ENCODE measurements at regions of chr9 and their contacts with region 1.

Region 1: DNA sequence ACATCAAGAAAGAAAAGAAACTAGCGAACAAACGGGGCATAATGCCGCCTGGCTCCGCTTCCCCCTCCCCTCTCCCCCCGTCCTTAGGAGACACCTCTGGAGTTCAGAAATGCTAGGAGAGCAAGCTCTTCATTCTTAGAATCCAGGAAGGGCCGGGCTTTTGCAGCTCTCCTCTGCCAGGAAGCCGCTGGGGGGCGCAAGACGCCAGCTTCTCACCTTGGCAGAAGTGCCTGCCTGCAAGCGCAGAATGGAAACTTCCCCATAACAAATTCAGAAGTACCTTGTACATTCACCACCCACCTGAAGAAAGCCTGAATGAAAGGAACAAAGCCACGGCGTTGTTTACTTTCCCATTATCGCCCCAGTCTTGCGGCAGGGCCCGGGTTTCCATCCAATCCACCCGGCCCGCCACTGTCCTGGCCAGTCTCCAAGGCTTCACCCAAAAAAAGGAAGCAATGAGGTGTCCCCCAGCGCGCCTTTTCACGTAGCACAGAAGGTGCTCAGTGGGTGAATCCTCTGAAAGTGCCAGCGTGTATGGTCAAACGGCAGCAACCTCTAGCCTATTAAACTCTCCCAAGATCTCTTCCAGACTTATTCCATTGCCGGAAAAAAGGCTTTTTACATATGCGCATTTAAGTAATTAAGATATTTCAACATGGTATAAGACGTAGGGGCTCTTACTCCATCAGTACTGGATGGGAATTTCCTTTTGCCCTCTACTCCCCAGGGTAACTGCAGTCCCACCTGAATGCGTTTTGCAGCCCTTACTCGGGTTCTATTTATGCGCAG is 1.6 kb upstream of the GADD45G start:
- DNase-seq: peak; percentile 43 to 92
- H3K4me3 ChIP-seq: peak overlapping the region; percentile 81 to 91
- H3K27ac ChIP-seq: peak overlapping the region; percentile 97
- H3K4me1 ChIP-seq: peaks cover 9 to 24% of the 10 kb centered on the region in 2 donors
- H3K27me3 ChIP-seq: no peaks in the 10 kb centered on the region
- CTCF ChIP-seq: peak; percentile 78 to 92 (median 86)

Region 2: DNA sequence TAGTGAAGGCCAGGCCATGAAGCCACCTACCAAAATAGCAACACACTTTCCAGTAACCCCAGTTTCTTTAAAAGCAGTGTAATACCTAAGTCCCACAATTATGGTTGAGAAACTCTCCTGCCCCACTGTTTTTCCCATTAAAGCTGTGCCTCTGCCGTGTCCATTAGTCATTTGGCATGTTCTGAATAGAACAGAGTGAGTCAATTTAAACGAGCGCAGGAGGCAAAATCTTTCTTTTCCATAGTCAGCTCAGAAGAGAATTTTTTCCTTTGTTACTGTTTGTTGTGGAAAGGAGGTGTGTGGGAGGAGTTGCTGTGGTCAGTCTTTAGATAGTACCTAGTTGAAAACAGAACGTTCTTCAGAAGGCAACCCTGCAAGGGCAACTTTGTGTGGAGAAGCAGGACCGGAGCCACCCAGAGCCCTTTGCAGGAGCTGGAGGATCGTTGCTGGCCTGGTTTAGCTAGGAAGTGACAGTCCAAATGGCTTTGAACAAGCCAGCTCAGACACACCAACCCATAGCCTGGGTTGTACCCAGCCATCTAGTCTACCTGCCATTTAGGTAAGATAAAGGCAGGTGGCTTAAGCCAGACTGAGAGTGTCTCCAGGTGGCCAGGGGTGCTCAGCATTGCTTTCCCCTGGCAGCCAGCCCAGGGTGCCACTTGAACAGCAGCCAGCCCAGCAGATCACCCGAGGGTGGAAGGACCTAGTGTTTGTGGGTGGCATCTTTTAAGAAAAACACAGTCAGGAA is 32.0 kb after region 1 on chr9:
- intact Hi-C with region 1: loop called (anchors 1 kb)
- DNase-seq: no peak
- H3K4me3 ChIP-seq: peak overlapping the region in 1 of 2 donors; percentile 3
- H3K27ac ChIP-seq: peak overlapping the region; percentile 26 to 64
- H3K4me1 ChIP-seq: peaks cover 11 to 27% of the 10 kb centered on the region in 2 donors
- H3K27me3 ChIP-seq: no peaks in the 10 kb centered on the region
- CTCF ChIP-seq: no peak

Region 3: DNA sequence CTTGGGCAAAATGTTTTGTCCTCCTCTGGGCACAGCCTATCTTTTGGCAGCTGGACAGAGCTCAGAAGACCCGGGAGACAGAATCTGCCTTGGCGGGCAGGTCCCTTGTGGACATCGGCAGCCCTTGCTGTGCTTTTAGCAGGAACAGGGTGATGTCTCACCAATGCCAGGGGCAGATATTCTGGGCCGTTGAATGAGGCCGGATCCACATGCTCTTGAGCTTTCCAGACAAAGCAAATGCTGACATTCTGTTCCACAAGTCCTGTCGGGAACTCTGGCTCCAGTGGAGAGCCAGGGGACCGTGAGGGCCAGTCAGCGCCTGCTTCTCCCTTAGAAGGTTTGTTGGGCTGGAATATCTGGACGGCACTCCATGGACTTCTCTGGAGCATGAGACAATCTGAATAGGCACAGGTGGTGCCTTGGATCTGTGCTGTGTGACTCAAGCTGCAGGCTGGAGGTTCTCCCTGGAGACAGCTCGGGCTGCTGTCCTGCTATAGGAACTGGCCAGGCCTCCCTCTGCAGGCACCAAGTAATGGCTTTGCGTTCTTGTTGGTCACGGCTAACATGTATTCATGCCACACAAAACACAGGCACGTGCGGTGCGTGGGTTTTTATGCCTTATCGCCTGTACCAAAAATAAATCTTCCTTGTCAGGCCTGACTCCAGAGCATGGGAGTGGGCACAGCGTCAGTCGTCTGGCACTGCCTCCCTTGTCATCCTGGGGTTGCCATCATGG is 81.9 kb after region 1 on chr9:
- intact Hi-C with region 1: loop called (anchors 1 kb)
- DNase-seq: peak; percentile 61 to 83
- H3K4me3 ChIP-seq: no peak overlapping the region
- H3K27ac ChIP-seq: peak overlapping the region; percentile 65 to 81
- H3K4me1 ChIP-seq: peaks cover 7 to 24% of the 10 kb centered on the region in 2 donors
- H3K27me3 ChIP-seq: no peaks in the 10 kb centered on the region
- CTCF ChIP-seq: peak in 1 of 3 experiments; percentile 18

Region 4: GRCh38 chr9:89999534-90000370 is 396.6 kb after region 1 on chr9:
- intact Hi-C with region 1: loop called (anchors 2 kb)
- DNase-seq: peak in 1 of 2 donors; percentile 82
- H3K4me3 ChIP-seq: peak overlapping the region; percentile 43 to 61
- H3K27ac ChIP-seq: peak overlapping the region; percentile 78 to 80
- H3K4me1 ChIP-seq: peaks cover 24 to 37% of the 10 kb centered on the region in 2 donors
- H3K27me3 ChIP-seq: no peaks in the 10 kb centered on the region
- CTCF ChIP-seq: no peak

Region 5: DNA sequence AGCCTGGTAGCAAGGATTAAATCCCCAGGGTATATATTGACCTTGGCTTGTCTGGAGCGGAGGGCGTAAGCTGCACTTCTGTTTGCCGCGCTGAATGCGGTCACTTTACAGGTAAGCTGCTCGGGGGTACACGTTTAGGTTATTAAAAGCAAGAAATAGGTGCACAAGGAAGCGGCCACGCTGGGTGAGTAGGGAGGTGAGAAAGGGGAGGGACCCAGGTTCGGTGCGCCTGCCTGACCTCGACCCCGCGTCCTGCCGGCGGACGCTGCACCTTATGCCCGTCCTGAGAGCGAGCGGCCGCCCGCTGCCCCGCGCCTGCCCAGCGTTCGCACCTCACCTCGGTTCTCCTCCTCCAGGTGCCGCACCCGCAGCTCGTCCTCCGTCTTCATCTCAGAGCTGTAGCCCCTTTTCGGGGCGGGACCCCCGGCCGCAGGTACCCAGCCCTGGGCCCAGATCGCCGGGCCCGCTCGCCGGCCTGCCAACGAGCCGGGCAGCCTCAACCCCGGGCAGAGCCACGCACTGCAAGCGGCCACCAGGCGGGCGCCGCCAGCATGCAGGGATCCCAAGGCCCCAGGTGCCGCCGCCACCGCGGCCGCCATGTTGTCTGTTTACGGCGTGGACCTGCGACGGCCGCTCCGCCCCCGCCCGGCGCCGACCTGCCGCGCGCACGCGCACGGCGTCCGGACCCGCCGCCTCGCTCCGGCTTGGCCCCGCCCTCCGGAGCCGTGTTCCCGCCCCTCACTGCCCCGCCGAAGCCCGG is 1758.3 kb after region 1 on chr9 and contains the start of gene AUH:
- intact Hi-C with region 1: loop called (anchors 5 kb)
- DNase-seq: peak; percentile 38 to 89
- H3K4me3 ChIP-seq: peak within 1 kb of the TSS; percentile 89 to 96
- H3K27ac ChIP-seq: peak within 1 kb of the TSS; percentile 86 to 88
- H3K4me1 ChIP-seq: peaks cover 0 to 7% of the 10 kb centered on the region in 2 donors
- H3K27me3 ChIP-seq: no peaks in the 10 kb centered on the region
- CTCF ChIP-seq: no peak
- total RNA-seq, gene AUH: 46.2 TPM

Measured in ascending aorta (tissue), 2 donors.